Body of pancreas (tissue), 4 donors: ENCODE measurements at regions of chr1 and their contacts with region 1.

Region 1: DNA sequence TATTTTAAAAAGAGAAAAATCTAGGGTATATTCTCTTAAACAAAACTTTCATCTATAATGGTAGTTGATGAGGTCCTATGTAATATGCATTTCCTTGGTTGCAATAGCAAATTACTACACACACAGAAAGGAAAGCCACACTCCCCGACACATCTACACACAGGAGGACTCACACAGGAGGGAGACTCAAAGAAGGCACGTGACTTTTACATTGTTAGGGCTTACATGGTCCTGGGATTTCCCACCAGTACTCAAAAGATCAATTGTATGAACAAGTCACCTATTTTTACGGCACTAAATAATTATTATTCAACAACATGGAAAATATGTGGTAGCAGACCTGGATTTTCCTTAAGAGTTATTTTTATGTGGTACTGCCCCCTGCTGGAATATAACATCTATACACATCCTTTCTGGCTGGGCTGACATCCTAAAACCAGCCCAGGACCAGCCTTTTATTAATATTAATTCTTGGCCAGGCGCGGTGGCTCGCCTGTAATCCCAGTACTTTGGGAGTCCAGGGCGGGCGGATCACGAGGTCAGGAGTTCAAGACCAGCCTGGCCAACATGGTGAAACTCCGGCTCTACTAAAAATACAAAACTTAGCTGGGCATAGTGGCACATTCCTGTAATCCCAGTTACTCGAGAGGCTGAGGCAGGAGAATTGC is 33.9 kb upstream of the LGALS8 start:
- DNase-seq: peak; percentile 49 to 69 (median 58)
- ATAC-seq: peak; percentile 87
- H3K4me3 ChIP-seq: no peak overlapping the region
- H3K27ac ChIP-seq: no peak overlapping the region
- H3K4me1 ChIP-seq: no peaks in the 10 kb centered on the region
- H3K27me3 ChIP-seq: no peaks in the 10 kb centered on the region
- CTCF ChIP-seq: peak; percentile 49 to 85 (median 76)
- POLR2A ChIP-seq: no peak

Region 2: GRCh38 chr1:236113324-236114032 is 376.4 kb before region 1 on chr1:
- intact Hi-C with region 1: loop called (anchors 5 kb)
- DNase-seq: no peak
- ATAC-seq: no peak
- H3K4me3 ChIP-seq: no peak overlapping the region
- H3K27ac ChIP-seq: no peak overlapping the region
- H3K4me1 ChIP-seq: no peaks in the 10 kb centered on the region
- H3K27me3 ChIP-seq: no peaks in the 10 kb centered on the region
- CTCF ChIP-seq: no peak
- POLR2A ChIP-seq: no peak

Region 3: GRCh38 chr1:236925386-236925785 is 435.5 kb after region 1 on chr1:
- intact Hi-C with region 1: no loop called
- DNase-seq: no peak
- ATAC-seq: no peak
- H3K4me3 ChIP-seq: no peak overlapping the region
- H3K27ac ChIP-seq: no peak overlapping the region
- H3K4me1 ChIP-seq: no peaks in the 10 kb centered on the region
- H3K27me3 ChIP-seq: no peaks in the 10 kb centered on the region
- CTCF ChIP-seq: no peak
- POLR2A ChIP-seq: no peak